GM12878 (cell line): ENCODE measurements at regions of chr9 and their contacts with region 1.

Region 1: GRCh38 chr9:125794708-125795107 is 47.5 kb downstream of the PBX3 start:
- DNase-seq: no peak
- ATAC-seq: peak; percentile 30
- H3K4me3 ChIP-seq: no peak overlapping the region
- H3K27ac ChIP-seq: no peak overlapping the region
- H3K4me1 ChIP-seq: no peaks in the 10 kb centered on the region
- H3K27me3 ChIP-seq: no peaks in the 10 kb centered on the region
- CTCF ChIP-seq: no peak
- EP300 ChIP-seq: no peak
- POLR2A ChIP-seq: no peak
- RAD21 ChIP-seq: no peak

Region 2: DNA sequence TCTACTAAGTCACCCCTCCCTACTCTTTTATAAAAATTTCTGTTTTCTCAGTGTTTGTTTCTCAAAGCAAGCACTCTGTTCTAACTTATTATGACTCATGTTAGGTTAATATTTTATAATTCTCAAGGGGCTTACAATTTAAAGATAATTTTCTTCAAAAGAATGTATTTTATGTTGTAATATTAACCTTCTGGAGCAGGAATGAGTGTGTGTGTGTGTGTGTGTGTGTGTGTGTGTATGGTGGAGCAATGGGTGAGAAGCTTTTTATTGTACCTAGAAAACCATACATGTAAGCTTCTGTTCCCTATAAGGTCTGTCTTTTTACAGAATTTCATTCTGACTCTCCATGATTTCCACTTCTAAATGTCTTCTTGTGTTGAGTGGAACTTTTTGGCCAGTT is 15.5 kb after region 1 on chr9:
- CTCF ChIA-PET with region 1: interaction called, 3 read pairs
- POLR2A ChIA-PET with region 1: interaction called, 4 read pairs
- RAD21 ChIA-PET with region 1: interaction called, 8 read pairs
- SMC1A ChIA-PET with region 1: interaction called, 10 read pairs
- in situ Hi-C with region 1: no loop called
- intact Hi-C with region 1: no loop called
- DNase-seq: no peak
- ATAC-seq: no peak
- H3K4me3 ChIP-seq: no peak overlapping the region
- H3K27ac ChIP-seq: no peak overlapping the region
- H3K4me1 ChIP-seq: peaks cover 3% of the 10 kb centered on the region
- H3K27me3 ChIP-seq: no peaks in the 10 kb centered on the region
- CTCF ChIP-seq: no peak
- EP300 ChIP-seq: no peak
- POLR2A ChIP-seq: no peak
- RAD21 ChIP-seq: no peak

Region 3: DNA sequence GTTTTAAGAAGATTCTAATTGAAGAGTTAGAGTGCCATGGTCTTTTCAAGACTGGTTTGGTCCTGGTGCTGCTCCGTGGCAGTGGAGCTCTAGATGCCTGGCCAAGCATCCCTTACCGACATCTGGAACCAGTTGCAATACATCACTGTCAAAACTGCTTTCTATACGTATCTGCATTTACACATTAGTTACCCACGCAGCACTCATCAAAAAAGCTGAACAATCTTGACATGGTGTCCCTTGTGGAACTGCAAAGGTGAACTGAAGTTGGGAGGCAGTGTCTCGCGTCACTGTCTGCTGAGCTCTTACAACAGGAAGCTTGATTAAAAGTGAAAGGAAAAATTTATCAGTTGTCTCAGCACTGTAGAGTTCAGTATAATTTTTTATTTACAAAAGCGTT is 35.0 kb after region 1 on chr9:
- CTCF ChIA-PET with region 1: no interaction called
- POLR2A ChIA-PET with region 1: interaction called, 3 read pairs
- RAD21 ChIA-PET with region 1: no interaction called
- SMC1A ChIA-PET with region 1: interaction called, 15 read pairs
- in situ Hi-C with region 1: no loop called
- intact Hi-C with region 1: no loop called
- DNase-seq: peak; percentile 54
- ATAC-seq: peak; percentile 95
- H3K4me3 ChIP-seq: peak overlapping the region; percentile 44
- H3K27ac ChIP-seq: peak overlapping the region; percentile 15; the same call in 1 of the 2 replicates
- H3K4me1 ChIP-seq: no peaks in the 10 kb centered on the region; the same call in 1 of the 2 replicates
- H3K27me3 ChIP-seq: no peaks in the 10 kb centered on the region
- CTCF ChIP-seq: no peak
- EP300 ChIP-seq: no peak
- POLR2A ChIP-seq: peak; percentile 34; the same call in 1 of the 2 replicates
- RAD21 ChIP-seq: no peak

Region 4: DNA sequence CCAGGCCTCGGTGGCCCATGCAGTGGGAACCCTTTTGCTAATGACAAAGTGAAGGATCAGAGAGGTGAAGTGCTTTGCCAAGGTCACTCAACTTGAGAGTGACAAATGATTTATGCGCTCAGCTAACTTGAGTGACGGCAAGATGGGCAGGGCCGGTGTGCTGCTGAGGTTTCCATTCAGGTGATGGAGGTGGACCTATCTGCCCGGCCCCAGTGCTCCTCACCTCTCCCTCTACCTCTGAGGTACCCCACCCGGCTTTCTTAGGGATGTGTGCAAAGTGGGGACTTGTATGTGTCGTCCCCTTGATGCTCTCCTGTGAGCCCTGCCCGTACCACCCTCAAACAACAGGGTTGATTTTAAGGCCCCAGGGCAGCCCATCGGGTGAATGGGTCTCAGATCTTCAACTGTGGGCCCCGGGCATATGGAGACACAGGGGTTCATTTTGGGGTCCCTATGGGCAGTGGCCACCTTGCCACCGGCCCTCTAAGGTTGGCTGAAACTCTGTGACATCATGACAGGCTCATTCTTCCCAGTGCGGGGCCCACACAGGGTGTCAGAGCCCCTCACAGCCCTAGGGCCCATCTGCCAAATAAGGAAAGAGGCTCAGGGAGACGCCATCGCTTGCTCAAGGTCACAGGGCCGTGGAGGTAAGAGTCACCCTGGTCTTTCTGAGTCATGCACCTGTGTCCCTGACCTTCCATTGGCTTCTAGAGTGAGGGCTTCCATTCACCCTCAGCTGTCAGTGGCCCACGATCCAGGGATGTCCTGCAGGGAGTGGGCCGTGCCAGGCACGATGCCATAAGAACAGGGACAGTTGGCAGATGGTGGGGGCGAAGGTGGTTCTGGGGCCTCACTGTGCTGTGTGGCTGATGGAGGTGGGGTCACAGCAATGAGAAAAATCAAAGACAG is 361.3 kb after region 1 on chr9:
- CTCF ChIA-PET with region 1: no interaction called
- POLR2A ChIA-PET with region 1: no interaction called
- RAD21 ChIA-PET with region 1: no interaction called
- SMC1A ChIA-PET with region 1: no interaction called
- in situ Hi-C with region 1: no loop called
- intact Hi-C with region 1: no loop called
- DNase-seq: no peak
- ATAC-seq: no peak
- H3K4me3 ChIP-seq: no peak overlapping the region
- H3K27ac ChIP-seq: no peak overlapping the region
- H3K4me1 ChIP-seq: no peaks in the 10 kb centered on the region
- H3K27me3 ChIP-seq: no peaks in the 10 kb centered on the region; a peak in 2 of 4 replicates
- CTCF ChIP-seq: no peak
- EP300 ChIP-seq: no peak
- POLR2A ChIP-seq: no peak
- RAD21 ChIP-seq: no peak